T-cell (primary cell): ENCODE measurements at regions of chr12 and their contacts with region 1.

Region 1: DNA sequence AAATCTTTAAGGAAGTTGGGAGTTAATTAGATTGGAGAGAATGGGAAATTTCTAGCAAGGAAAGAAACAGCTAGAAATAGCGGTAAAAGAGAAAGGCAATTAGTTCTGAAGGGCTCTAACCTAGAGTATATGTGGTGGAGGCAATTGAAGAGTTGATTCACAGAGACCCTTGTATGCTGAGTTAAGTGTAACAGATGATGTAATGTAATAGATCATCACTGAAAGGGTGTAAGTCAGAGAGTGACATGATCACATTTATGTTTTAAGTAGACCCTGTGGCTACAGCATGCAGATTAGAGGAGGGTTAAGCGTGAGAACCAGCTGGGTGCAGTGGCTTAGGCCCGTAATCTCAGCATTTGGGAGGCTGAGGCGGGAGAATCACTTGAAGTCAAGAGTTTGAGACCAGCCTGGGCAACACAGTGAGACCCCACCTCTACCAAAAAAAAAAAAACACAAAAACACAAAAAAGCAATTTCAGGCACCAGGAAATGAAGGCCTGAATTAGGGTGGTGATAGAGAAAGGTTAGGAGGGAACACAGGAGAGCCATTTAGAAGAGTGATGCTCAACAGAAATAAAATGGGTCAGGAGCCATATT is 3.0 kb downstream of the RBP5 start:
- DNase-seq: no peak
- ATAC-seq: no peak
- H3K4me3 ChIP-seq: no peak overlapping the region
- H3K4me3 Mint-ChIP-seq: no peak overlapping the region
- H3K27ac ChIP-seq: no peak overlapping the region
- H3K27ac Mint-ChIP-seq: no peak overlapping the region
- H3K4me1 ChIP-seq: peaks cover 4 to 19% of the 10 kb centered on the region in 2 experiments
- H3K4me1 Mint-ChIP-seq: peaks cover 8 to 25% (median 16%) of the 10 kb centered on the region in 3 donors
- H3K27me3 ChIP-seq: no peaks in the 10 kb centered on the region
- H3K27me3 Mint-ChIP-seq: no peaks in the 10 kb centered on the region

Region 2: DNA sequence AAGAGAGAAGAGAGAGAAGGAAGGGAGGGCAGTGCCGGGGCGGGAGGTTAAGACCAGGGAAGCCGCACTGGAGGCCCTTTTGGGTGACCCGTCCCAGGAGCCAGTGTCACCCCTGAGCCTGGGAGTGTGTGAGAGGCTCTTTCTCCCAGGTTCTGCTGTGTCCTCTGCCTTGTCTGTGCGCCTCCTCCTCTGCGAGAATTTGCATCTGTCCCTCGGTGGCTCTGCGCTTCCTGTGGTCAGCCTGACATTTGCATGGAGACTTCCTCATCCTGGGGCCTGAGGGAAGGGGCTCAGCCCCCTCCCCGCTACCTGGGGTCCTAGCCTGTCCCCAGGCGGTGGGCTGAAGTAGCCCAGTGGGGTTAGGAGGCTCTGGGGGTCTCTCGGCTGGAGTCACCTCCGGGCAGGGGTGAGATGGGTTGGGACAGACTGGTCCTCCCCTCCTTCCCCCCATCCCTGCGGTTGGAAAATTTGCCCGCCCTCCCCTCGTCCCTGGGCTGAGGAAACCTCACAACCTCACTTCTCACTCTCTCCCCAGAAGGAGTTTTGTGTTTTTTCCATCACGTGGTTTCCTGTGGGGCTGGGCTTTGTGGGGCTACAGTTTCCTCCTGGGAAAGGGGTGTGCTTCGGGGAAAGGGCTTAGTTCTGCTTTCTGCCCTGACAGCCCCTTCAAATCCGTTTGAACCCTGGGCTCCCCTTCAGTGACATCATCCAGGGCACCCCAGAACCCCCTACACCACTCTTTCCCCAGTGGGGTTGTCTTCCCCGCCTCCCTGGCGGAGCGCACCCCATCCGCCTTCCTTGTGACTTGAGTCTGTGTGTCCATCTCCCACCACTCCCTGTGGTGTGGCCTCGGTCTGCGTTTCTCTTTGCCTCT is 172.1 kb before region 1 on chr12:
- CTCF ChIA-PET with region 1: no interaction called
- POLR2A ChIA-PET with region 1: no interaction called
- DNase-seq: peak in 27 of 35 experiments; percentile 33 to 86 (median 53)
- ATAC-seq: peak; percentile 32 to 48 (median 40)
- H3K4me3 ChIP-seq: peak overlapping the region; percentile 77 to 90
- H3K4me3 Mint-ChIP-seq: peak overlapping the region; percentile 88 to 98 (median 91)
- H3K27ac ChIP-seq: peak overlapping the region; percentile 97
- H3K27ac Mint-ChIP-seq: peak overlapping the region; percentile 97 to 100
- H3K4me1 ChIP-seq: peaks cover 57 to 86% of the 10 kb centered on the region in 2 experiments
- H3K4me1 Mint-ChIP-seq: peaks cover 79 to 86% (median 85%) of the 10 kb centered on the region in 3 donors
- H3K27me3 ChIP-seq: no peaks in the 10 kb centered on the region
- H3K27me3 Mint-ChIP-seq: no peaks in the 10 kb centered on the region

Region 3: DNA sequence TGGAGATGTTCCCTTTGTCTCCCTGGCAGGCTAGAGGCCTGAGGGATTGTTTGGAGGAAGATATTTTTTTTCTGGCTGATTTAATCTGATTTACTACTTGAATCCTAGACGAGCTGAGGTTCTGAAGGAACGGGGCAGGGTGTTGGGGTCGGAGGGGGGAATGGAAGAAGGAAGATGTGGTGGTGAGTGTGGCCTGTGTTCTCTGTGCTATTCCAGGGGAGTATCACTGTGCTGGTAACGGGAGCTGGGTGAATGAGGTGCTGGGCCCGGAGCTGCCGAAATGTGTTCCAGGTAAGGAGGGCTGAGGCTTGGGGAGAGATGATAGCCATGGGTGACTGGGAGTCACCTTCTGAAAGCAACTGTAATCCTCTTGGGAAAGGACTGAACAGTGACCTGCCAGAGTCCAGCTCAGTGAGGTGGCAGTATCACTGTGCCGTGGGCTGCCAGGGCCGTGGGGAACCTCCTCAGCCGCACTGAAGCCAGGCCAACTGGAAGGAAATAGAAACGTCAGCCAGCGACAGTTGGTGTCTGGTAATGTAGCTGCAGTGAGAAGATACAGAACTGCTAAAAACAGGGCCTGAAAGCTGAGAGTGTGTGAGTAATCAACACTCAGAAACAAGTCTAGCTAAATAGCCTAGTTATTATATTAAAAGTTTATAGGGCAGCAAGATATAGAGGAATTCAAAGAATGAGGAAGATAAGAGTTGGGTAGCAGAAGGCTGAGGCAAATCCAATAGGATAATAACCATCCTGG is 57.3 kb before region 1 on chr12:
- CTCF ChIA-PET with region 1: no interaction called
- POLR2A ChIA-PET with region 1: no interaction called
- DNase-seq: no peak
- ATAC-seq: no peak
- H3K4me3 ChIP-seq: no peak overlapping the region
- H3K4me3 Mint-ChIP-seq: no peak overlapping the region
- H3K27ac ChIP-seq: no peak overlapping the region
- H3K27ac Mint-ChIP-seq: no peak overlapping the region
- H3K4me1 ChIP-seq: no peaks in the 10 kb centered on the region
- H3K4me1 Mint-ChIP-seq: no peaks in the 10 kb centered on the region
- H3K27me3 ChIP-seq: peaks cover 0 to 13% of the 10 kb centered on the region in 2 experiments
- H3K27me3 Mint-ChIP-seq: peaks cover 7 to 10% of the 10 kb centered on the region in 2 donors

Region 4: GRCh38 chr12:7154007-7154406 is 28.3 kb after region 1 on chr12:
- CTCF ChIA-PET with region 1: no interaction called
- POLR2A ChIA-PET with region 1: interaction called in 1 of 2 experiments, 11 read pairs
- DNase-seq: no peak
- ATAC-seq: no peak
- H3K4me3 ChIP-seq: no peak overlapping the region
- H3K4me3 Mint-ChIP-seq: no peak overlapping the region
- H3K27ac ChIP-seq: no peak overlapping the region
- H3K27ac Mint-ChIP-seq: no peak overlapping the region
- H3K4me1 ChIP-seq: no peaks in the 10 kb centered on the region
- H3K4me1 Mint-ChIP-seq: no peaks in the 10 kb centered on the region
- H3K27me3 ChIP-seq: peaks cover 0 to 2% of the 10 kb centered on the region in 2 experiments
- H3K27me3 Mint-ChIP-seq: no peaks in the 10 kb centered on the region